Heart right ventricle (tissue), 16 donors: ENCODE measurements at regions of chrX and their contacts with region 1.

Region 1: GRCh38 chrX:17812763-17813162 is 48.3 kb downstream of the RAI2 start:
- DNase-seq: no peak
- ATAC-seq: peak in 2 of 8 donors; percentile 58 to 63
- H3K4me3 ChIP-seq: no peak overlapping the region
- H3K27ac ChIP-seq: no peak overlapping the region
- H3K4me1 ChIP-seq: peaks cover 0 to 22% (median 0%) of the 10 kb centered on the region in 9 donors
- H3K27me3 ChIP-seq: no peaks in the 10 kb centered on the region
- CTCF ChIP-seq: peak; percentile 16 to 73 (median 58)

Region 2: DNA sequence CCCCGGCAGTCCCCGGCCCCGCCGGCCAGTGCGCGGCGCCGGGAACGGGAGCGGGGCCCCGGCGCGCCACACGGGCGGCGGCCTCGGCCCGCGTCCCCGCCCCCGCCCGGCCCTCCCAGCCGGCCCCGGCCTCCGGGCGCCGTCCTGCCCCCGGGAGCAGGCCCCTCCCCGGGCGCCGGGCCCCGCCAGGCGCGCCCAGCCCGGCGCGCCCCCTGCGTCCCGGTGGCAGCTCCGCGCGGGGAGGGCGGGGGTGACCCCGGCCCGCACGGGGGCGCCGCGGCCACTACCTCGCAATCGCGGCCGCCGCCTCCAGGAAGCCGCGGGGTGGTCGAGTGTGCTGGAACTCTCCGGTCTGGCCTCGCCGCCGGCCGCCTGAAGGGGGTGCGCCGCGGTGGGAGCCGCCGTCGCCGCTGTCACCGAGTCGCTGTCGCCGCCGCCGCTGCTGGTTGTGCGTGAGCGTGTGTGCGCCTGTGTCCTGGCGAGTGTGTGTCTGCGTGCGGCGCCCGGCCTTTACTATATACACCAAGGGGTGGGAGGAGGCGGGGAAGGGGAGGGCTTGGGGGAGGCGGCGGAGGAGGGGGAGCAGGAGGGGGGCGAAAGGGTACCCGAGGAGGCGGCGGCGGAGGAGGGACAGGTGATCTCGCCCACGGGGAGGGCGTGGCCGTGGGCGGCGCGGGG is 48.2 kb after region 1 on chrX and contains the start of gene RAI2:
- intact Hi-C with region 1: loop called in 3 of 10 experiments (anchors 2 to 10 kb)
- DNase-seq: peak; percentile 25 to 34
- ATAC-seq: peak; percentile 60 to 75 (median 70)
- H3K4me3 ChIP-seq: peak within 1 kb of the TSS; percentile 35 to 78 (median 70)
- H3K27ac ChIP-seq: peak within 1 kb of the TSS; percentile 50 to 81 (median 73)
- H3K4me1 ChIP-seq: peaks cover 0 to 15% (median 0%) of the 10 kb centered on the region in 9 donors
- H3K27me3 ChIP-seq: peaks cover 0 to 71% (median 0%) of the 10 kb centered on the region in 7 donors
- CTCF ChIP-seq: peak in 3 of 9 donors; percentile 8 to 12 (median 9)
- total RNA-seq, gene RAI2: 15.5 to 25.3 (median 20.6) TPM

Region 3: GRCh38 chrX:17876164-17876563 is 63.4 kb after region 1 on chrX:
- intact Hi-C with region 1: loop called in 2 of 10 experiments (anchors 5 to 10 kb)
- DNase-seq: no peak
- ATAC-seq: no peak
- H3K4me3 ChIP-seq: no peak overlapping the region
- H3K27ac ChIP-seq: no peak overlapping the region
- H3K4me1 ChIP-seq: no peaks in the 10 kb centered on the region
- H3K27me3 ChIP-seq: peaks cover 0 to 41% (median 0%) of the 10 kb centered on the region in 7 donors
- CTCF ChIP-seq: peak in 4 of 9 donors; percentile 11 to 24 (median 18)